ENCODE measurements at regions of chr11 and their contacts with region 1.

Region 1: GRCh38 chr11:6667733-6668374 is 12.2 kb upstream of the DCHS1 start:
- DNase-seq: peak; percentile 69
- ATAC-seq: peak; percentile 69
- H3K4me3 Mint-ChIP-seq: no peak overlapping the region
- H3K27ac Mint-ChIP-seq: peak overlapping the region; percentile 61
- H3K4me1 Mint-ChIP-seq: peaks cover 60% of the 10 kb centered on the region
- H3K27me3 Mint-ChIP-seq: no peaks in the 10 kb centered on the region

Region 2: GRCh38 chr11:6315811-6316425 is 351.9 kb before region 1 on chr11:
- CTCF ChIA-PET with region 1: no interaction called
- DNase-seq: peak; percentile 55
- ATAC-seq: peak; percentile 55
- H3K4me3 Mint-ChIP-seq: no peak overlapping the region
- H3K27ac Mint-ChIP-seq: no peak overlapping the region
- H3K4me1 Mint-ChIP-seq: peaks cover 14% of the 10 kb centered on the region
- H3K27me3 Mint-ChIP-seq: peaks cover 61% of the 10 kb centered on the region

Region 3: DNA sequence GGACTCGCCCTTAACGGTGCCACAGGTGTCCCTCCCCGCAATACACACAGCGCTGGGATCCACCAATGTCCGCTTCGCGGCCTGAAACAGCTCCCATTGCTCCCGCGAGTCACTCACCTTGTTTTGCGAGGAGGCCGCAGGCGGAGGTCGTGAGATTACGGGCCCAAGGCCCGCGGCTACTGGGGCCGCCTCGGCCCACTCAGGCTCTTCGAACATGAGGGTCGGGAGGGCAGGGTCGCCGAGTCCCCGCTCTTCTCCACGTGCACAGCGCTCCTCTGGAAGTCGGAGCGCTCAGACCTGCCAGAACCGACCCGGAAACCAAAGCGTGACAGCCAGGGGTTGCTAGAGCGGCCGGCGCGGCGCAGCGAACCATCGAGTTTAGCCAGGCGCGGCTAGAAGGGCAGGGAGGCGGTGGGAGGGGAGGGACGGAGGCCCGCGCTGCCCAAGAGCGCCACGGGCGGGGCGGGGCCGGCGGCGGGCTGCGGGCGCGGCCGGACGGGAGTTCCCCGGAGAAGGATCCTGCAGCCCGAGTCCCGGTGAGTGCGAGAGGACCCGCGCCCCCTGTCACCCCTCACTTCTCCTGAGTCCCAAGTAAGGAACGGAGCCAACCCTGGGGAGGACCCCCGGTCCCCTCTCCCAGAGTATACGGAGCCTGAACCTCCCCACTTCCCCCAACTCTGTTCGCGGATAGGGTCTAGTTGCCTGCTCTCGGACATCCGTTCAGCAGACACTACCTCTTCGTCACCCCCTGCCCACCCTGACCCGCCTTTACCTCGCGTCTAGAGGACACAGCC is 64.4 kb before region 1 on chr11 and contains the starts of genes ILK and RRP8:
- CTCF ChIA-PET with region 1: interaction called, 15 read pairs
- DNase-seq: peak; percentile 94
- ATAC-seq: peak; percentile 78
- H3K4me3 Mint-ChIP-seq: no peak within 1 kb of the TSS
- H3K27ac Mint-ChIP-seq: no peak within 1 kb of the TSS
- H3K4me1 Mint-ChIP-seq: peaks cover 30% of the 10 kb centered on the region
- H3K27me3 Mint-ChIP-seq: no peaks in the 10 kb centered on the region
- total RNA-seq, gene ILK: 151 to 161 TPM
- total RNA-seq, gene RRP8: 25.6 to 33.1 TPM

Region 4: DNA sequence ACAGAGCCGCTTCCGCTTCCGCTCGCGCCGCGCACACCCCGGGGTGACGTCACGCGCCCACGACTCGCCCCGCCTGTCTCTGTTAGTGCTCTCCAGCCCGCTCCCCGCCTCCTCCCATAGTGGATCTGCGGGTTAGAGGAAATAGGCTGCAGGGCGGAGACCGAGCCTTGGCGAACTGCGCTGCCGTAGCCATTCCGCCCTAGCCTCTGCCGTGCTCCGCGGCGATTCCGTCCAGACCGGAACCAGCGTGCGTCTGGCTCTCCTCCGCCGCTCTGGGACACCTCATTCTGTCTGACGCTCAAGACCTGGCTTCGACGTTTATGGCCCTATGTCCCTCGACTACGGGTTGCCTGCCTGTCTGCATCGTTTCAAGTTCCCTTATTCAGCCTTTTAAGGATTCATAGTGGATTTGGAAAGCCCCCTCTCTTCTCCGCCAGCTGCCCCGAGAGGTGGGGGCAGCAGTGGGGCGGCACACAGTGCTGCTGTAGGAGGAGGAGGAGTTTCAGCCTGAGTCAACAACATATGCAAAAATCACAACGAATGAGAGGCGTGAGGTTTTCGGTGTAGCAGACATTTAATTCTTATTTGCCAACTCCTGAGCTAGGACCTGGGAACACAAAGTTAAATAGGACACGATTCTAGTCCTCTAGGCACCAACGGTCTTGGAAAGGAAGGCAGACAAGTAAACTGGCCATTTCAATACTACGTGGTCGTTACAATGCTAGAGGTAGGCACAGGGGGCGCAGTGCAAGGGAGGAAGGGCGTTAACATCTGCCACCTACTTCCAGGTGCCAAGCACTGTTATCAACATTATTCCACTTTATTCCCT is 55.4 kb before region 1 on chr11 and contains the start of gene TAF10:
- CTCF ChIA-PET with region 1: interaction called, 18 read pairs
- DNase-seq: peak; percentile 97
- ATAC-seq: peak; percentile 92
- H3K4me3 Mint-ChIP-seq: no peak within 1 kb of the TSS
- H3K27ac Mint-ChIP-seq: peak within 1 kb of the TSS; percentile 91
- H3K4me1 Mint-ChIP-seq: peaks cover 41% of the 10 kb centered on the region
- H3K27me3 Mint-ChIP-seq: no peaks in the 10 kb centered on the region
- total RNA-seq, gene TAF10: 134 to 144 TPM

Region 5: GRCh38 chr11:6619004-6619745 is 48.7 kb before region 1 on chr11 and contains the start of gene TPP1:
- CTCF ChIA-PET with region 1: interaction called, 15 read pairs
- DNase-seq: peak; percentile 96
- ATAC-seq: peak; percentile 96
- H3K4me3 Mint-ChIP-seq: no peak within 1 kb of the TSS
- H3K27ac Mint-ChIP-seq: no peak within 1 kb of the TSS
- H3K4me1 Mint-ChIP-seq: peaks cover 2% of the 10 kb centered on the region
- H3K27me3 Mint-ChIP-seq: no peaks in the 10 kb centered on the region
- total RNA-seq, gene TPP1: 76.8 to 79.3 TPM

Region 6: GRCh38 chr11:6862961-6863360 is 195.1 kb after region 1 on chr11 and contains the start of gene OR10A2:
- CTCF ChIA-PET with region 1: no interaction called
- DNase-seq: no peak
- ATAC-seq: no peak
- H3K4me3 Mint-ChIP-seq: no peak within 1 kb of the TSS
- H3K27ac Mint-ChIP-seq: no peak within 1 kb of the TSS
- H3K4me1 Mint-ChIP-seq: no peaks in the 10 kb centered on the region
- H3K27me3 Mint-ChIP-seq: peaks cover 15% of the 10 kb centered on the region
- total RNA-seq, gene OR10A2: not detected